ENCODE measurements at regions of chr17 and their contacts with region 1.

Region 1: GRCh38 chr17:74736513-74737298 is at the start of gene RAB37:
- DNase-seq: peak; percentile 53
- H3K4me3 Mint-ChIP-seq: peak within 1 kb of the TSS; percentile 77
- H3K27ac Mint-ChIP-seq: peak within 1 kb of the TSS; percentile 86
- H3K4me1 Mint-ChIP-seq: peaks cover 43% of the 10 kb centered on the region
- H3K27me3 Mint-ChIP-seq: no peaks in the 10 kb centered on the region
- total RNA-seq, gene RAB37: 6.5 to 7.0 TPM

Region 2: DNA sequence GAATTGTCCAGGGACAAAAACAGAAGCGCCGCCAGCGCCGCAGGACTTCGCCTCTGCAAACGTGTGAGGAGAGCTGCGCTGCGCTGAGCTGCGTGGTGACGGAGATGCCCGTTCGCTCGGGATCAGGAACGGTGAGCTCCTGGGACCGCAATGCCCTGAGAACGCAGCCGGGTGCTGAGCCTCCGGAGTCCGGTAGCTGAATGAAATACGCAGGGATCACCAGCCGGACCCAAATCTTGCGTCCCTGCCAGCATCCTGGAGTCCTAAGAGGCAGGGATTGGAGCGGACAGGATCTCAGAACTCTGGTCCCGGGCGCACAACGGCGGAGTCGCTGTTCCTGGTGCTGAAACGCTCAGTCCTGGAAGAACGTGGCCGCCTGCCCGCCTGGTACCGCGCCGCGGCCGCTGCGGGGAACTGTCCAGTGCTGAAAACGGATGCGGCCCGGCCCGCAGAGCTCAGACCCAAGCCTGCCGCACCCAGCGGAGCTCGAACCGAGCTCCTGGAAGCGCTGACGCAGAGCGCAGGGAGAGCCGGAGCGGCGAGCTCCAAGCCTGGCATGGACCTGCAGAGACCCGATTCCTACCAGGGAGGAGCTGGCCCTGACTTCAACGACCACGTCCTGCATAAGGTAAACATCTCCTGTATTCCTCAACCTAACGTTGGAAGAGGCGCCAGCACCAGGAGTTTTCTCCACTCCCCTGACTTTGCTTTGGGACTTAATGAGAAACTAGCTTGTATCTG is 65.5 kb before region 1 on chr17:
- CTCF ChIA-PET with region 1: interaction called, 10 read pairs
- POLR2A ChIA-PET with region 1: no interaction called
- intact Hi-C with region 1: no loop called
- DNase-seq: peak; percentile 86
- H3K4me3 Mint-ChIP-seq: no peak overlapping the region
- H3K27ac Mint-ChIP-seq: no peak overlapping the region
- H3K4me1 Mint-ChIP-seq: no peaks in the 10 kb centered on the region
- H3K27me3 Mint-ChIP-seq: peaks cover 43% of the 10 kb centered on the region

Region 3: GRCh38 chr17:74748529-74749365 is 12.0 kb after region 1 on chr17 and contains the start of gene NHERF1:
- CTCF ChIA-PET with region 1: interaction called, 54 read pairs
- POLR2A ChIA-PET with region 1: interaction called, 16 read pairs
- intact Hi-C with region 1: no loop called
- DNase-seq: peak; percentile 96
- H3K4me3 Mint-ChIP-seq: peak within 1 kb of the TSS; percentile 84
- H3K27ac Mint-ChIP-seq: peak within 1 kb of the TSS; percentile 85
- H3K4me1 Mint-ChIP-seq: peaks cover 52% of the 10 kb centered on the region
- H3K27me3 Mint-ChIP-seq: no peaks in the 10 kb centered on the region
- total RNA-seq, gene NHERF1: 136 TPM

Region 4: GRCh38 chr17:74770498-74771318 is 34.0 kb after region 1 on chr17:
- CTCF ChIA-PET with region 1: interaction called, 33 read pairs
- POLR2A ChIA-PET with region 1: interaction called, 7 read pairs
- intact Hi-C with region 1: no loop called
- DNase-seq: peak; percentile 83
- H3K4me3 Mint-ChIP-seq: no peak overlapping the region
- H3K27ac Mint-ChIP-seq: peak overlapping the region; percentile 71
- H3K4me1 Mint-ChIP-seq: peaks cover 40% of the 10 kb centered on the region
- H3K27me3 Mint-ChIP-seq: no peaks in the 10 kb centered on the region

Region 5: GRCh38 chr17:74864866-74865395 is 128.2 kb after region 1 on chr17:
- CTCF ChIA-PET with region 1: interaction called, 19 read pairs
- POLR2A ChIA-PET with region 1: interaction called, 4 read pairs
- intact Hi-C with region 1: loop called (anchors 5 kb)
- DNase-seq: peak; percentile 81
- H3K4me3 Mint-ChIP-seq: no peak overlapping the region
- H3K27ac Mint-ChIP-seq: no peak overlapping the region
- H3K4me1 Mint-ChIP-seq: peaks cover 12% of the 10 kb centered on the region
- H3K27me3 Mint-ChIP-seq: peaks cover 16% of the 10 kb centered on the region

Region 6: GRCh38 chr17:75430159-75430974 is 693.7 kb after region 1 on chr17:
- CTCF ChIA-PET with region 1: no interaction called
- POLR2A ChIA-PET with region 1: no interaction called
- intact Hi-C with region 1: no loop called
- DNase-seq: no peak
- H3K4me3 Mint-ChIP-seq: no peak overlapping the region
- H3K27ac Mint-ChIP-seq: no peak overlapping the region
- H3K4me1 Mint-ChIP-seq: peaks cover 18% of the 10 kb centered on the region
- H3K27me3 Mint-ChIP-seq: no peaks in the 10 kb centered on the region